ENCODE measurements at regions of chr19 and their contacts with region 1.

Region 1: DNA sequence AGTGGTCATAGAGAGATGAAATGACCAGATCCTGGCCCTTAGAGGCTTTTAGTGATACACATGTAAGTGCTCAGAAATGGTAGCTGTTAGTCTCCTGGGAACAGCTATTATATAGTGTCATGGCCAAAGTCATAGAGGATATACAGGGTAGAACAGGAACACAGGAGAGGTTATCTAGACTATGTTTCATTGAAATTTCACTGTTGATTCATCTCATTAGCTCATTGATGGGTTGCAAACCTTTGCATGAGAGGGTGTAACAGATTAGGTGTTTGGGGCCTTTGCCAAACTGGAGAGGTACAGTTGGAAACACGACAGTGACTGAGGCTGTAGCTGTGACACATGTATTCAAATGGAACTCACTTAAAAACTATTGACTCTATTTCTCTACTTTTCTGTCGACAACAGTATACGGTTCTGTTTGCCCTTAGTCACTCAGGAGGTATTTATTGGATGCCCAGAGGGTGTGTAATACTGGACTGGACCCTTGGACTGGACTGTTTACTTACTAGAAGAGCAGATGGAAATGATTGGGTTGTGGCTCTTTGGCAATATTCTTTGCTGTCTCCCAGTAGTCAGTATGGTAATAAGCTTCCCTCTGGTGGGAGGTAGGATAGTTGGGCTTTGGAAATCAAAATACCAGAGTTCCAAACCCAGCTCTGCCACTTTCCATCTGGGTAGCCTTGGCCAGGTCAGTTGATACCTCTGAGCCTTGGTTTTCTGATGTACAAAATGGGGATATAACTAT is 29.8 kb downstream of the ARHGAP35 start:
- DNase-seq: peak; percentile 53
- H3K4me3 Mint-ChIP-seq: no peak overlapping the region
- H3K27ac Mint-ChIP-seq: peak overlapping the region; percentile 67
- H3K4me1 Mint-ChIP-seq: peaks cover 50% of the 10 kb centered on the region
- H3K27me3 Mint-ChIP-seq: no peaks in the 10 kb centered on the region
- CTCF ChIP-seq: no peak

Region 2: GRCh38 chr19:46904114-46905060 is 13.8 kb after region 1 on chr19:
- CTCF ChIA-PET with region 1: interaction called, 12 read pairs
- intact Hi-C with region 1: no loop called
- DNase-seq: no peak
- H3K4me3 Mint-ChIP-seq: no peak overlapping the region
- H3K27ac Mint-ChIP-seq: no peak overlapping the region
- H3K4me1 Mint-ChIP-seq: peaks cover 57% of the 10 kb centered on the region
- H3K27me3 Mint-ChIP-seq: no peaks in the 10 kb centered on the region
- CTCF ChIP-seq: no peak

Region 3: GRCh38 chr19:47358936-47359335 is 468.3 kb after region 1 on chr19:
- CTCF ChIA-PET with region 1: interaction called, 13 read pairs
- intact Hi-C with region 1: no loop called
- DNase-seq: no peak
- H3K4me3 Mint-ChIP-seq: no peak overlapping the region
- H3K27ac Mint-ChIP-seq: no peak overlapping the region
- H3K4me1 Mint-ChIP-seq: no peaks in the 10 kb centered on the region
- H3K27me3 Mint-ChIP-seq: no peaks in the 10 kb centered on the region
- CTCF ChIP-seq: no peak